ENCODE measurements at regions of chr12 and their contacts with region 1.

Region 1: DNA sequence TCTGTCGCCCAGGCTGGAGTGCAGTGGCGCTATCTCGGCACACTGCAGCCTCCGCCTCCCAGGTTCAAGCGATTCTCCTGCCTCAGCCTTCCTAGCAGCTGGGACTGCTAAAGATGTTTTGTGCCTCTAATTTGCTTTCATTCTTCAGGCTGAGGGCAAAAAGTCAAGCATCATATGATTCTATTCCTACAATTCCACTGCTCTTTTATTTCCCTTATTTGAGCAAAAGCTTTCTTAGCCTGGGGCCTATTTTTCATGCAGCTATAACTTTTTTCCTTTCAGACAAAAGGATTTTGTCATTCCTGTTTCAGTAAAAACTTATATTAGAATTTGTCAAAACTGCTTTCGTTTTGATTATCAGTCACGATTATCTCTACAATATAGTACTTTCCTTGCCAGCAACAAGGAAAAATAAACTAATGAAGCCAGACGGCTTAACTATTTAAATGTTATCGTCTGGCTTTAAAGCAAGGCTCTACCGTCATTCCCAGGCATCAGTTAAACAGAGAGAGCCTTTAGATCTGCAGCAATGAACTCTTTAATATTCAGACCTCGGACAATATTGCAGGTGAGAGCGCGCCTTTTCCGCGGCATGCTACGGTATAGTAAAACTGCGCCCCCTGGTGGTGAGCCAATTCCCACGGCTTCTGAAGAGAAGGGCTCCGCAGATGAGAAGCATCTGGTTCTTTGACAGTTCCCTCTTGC is 1.4 kb upstream of the SLC2A13 start:
- DNase-seq: peak; percentile 87 to 94 (median 90)
- ATAC-seq: peak; percentile 63
- H3K4me3 ChIP-seq: peak overlapping the region; percentile 7 to 32
- H3K27ac ChIP-seq: peak overlapping the region in 1 of 2 donors; percentile 34
- H3K4me1 ChIP-seq: peaks cover 11 to 37% of the 10 kb centered on the region in 2 donors
- H3K27me3 ChIP-seq: no peaks in the 10 kb centered on the region
- CTCF ChIP-seq: peak; percentile 92 to 94

Region 2: GRCh38 chr12:39764944-39765560 is 342.2 kb before region 1 on chr12:
- intact Hi-C with region 1: loop called in 1 of 2 experiments (anchors 10 kb)
- DNase-seq: peak in 2 of 4 donors; percentile 26 to 40
- ATAC-seq: peak; percentile 88
- H3K4me3 ChIP-seq: no peak overlapping the region
- H3K27ac ChIP-seq: no peak overlapping the region
- H3K4me1 ChIP-seq: no peaks in the 10 kb centered on the region
- H3K27me3 ChIP-seq: no peaks in the 10 kb centered on the region
- CTCF ChIP-seq: peak; percentile 53 to 83

Region 3: GRCh38 chr12:40010899-40011774 is 96.1 kb before region 1 on chr12:
- intact Hi-C with region 1: loop called in 1 of 2 experiments (anchors 5 kb)
- DNase-seq: peak in 3 of 4 donors; percentile 36 to 66 (median 40)
- ATAC-seq: peak; percentile 97
- H3K4me3 ChIP-seq: peak overlapping the region in 1 of 2 donors; percentile 10
- H3K27ac ChIP-seq: no peak overlapping the region
- H3K4me1 ChIP-seq: peaks cover 0 to 12% of the 10 kb centered on the region in 2 donors
- H3K27me3 ChIP-seq: no peaks in the 10 kb centered on the region
- CTCF ChIP-seq: peak; percentile 73 to 78